Activated T-helper 1 cell treated with anti-CD3 and anti-CD28 coated beads, Interleukin-12 subunit alpha, Interleukin-12 subunit beta, Interleukin-2, Interleukin-4 antibody, amounts not matched to agents 30 ng/mL and 10 ng/mL and 1 ng/mL, durations not matched to agents 14 hours and 24 hours and 36 hours (primary cell): ENCODE measurements at regions of chr3 and their contacts with region 1.

Region 1: GRCh38 chr3:9669720-9670432 is 20.6 kb downstream of the MTMR14 start:
- DNase-seq: no peak
- H3K4me3 Mint-ChIP-seq: no peak overlapping the region
- H3K27ac Mint-ChIP-seq: no peak overlapping the region
- H3K4me1 Mint-ChIP-seq: no peaks in the 10 kb centered on the region
- H3K27me3 Mint-ChIP-seq: no peaks in the 10 kb centered on the region

Region 2: DNA sequence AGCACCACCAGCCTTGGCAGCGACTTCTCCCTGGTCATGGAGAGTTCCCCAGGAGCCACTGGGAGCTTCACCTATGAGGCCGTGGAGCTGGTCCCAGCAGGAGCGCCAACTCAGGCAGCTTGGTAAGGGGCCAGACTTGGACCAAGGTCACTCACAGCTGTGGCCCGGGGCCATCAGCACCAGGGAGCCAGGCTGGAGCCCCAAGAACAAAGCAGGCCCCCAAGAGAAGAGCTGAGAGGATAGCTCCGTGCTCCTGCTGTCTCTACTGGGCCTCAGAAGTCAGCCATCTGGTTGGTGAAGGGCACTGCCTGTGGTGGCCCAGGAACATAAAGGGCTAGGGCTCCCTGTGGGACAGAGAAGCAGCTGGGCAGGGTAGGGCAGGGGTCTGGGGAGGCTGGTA is 19.1 kb after region 1 on chr3:
- intact Hi-C with region 1: loop called (anchors 1 kb)
- DNase-seq: no peak
- H3K4me3 Mint-ChIP-seq: no peak overlapping the region
- H3K27ac Mint-ChIP-seq: no peak overlapping the region
- H3K4me1 Mint-ChIP-seq: no peaks in the 10 kb centered on the region
- H3K27me3 Mint-ChIP-seq: no peaks in the 10 kb centered on the region

Region 3: GRCh38 chr3:10122724-10123123 is 452.8 kb after region 1 on chr3:
- intact Hi-C with region 1: no loop called
- DNase-seq: no peak
- H3K4me3 Mint-ChIP-seq: no peak overlapping the region
- H3K27ac Mint-ChIP-seq: peak overlapping the region; percentile 73
- H3K4me1 Mint-ChIP-seq: peaks cover 32% of the 10 kb centered on the region
- H3K27me3 Mint-ChIP-seq: no peaks in the 10 kb centered on the region